Mammary epithelial cell (primary cell): ENCODE measurements at regions of chr6 and their contacts with region 1.

Region 1: DNA sequence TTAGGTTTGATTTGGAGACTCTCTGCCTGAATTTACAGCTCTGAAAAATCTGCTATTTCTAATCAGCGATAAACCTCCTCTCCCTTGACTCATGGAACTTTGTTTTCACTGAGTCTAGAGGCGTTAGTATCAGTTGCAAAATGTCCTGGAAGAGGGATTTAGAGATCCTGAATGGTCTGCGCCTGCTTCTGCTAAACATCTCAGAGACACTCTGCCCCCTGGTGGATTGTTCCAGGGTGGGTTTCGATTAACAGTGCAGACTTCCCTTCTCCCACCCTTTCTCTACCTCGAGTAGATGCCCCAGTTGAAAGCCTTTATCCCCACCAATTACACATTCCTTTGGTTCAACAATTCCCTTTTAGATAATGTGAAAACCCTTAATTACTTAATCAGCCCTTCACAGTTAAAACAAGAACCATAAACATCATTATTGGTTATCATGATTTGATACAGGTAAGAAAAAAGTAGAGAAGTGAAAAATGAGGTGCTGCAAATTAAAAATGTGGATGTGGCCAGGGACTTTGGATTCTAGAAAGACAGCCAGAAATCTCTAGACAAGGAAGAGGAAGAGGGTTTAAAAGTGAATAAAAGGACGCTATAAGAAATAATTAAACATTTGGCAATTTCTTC is 5.5 kb downstream of the HTR1B start:
- DNase-seq: peak; percentile 75
- H3K4me3 ChIP-seq: no peak overlapping the region
- H3K27ac ChIP-seq: peak overlapping the region; percentile 74
- H3K4me1 ChIP-seq: peaks cover 21% of the 10 kb centered on the region
- H3K27me3 ChIP-seq: no peaks in the 10 kb centered on the region
- CTCF ChIP-seq: peak; percentile 64 to 70

Region 2: GRCh38 chr6:75934643-75935472 is 1523.0 kb before region 1 on chr6:
- CTCF ChIA-PET with region 1: no interaction called
- dilution Hi-C with region 1: no loop called
- in situ Hi-C with region 1: no loop called
- intact Hi-C with region 1: loop called (anchors 5 kb)
- DNase-seq: peak; percentile 57
- H3K4me3 ChIP-seq: peak overlapping the region; percentile 25 to 44 (median 43)
- H3K27ac ChIP-seq: no peak overlapping the region
- H3K4me1 ChIP-seq: peaks cover 6% of the 10 kb centered on the region
- H3K27me3 ChIP-seq: no peaks in the 10 kb centered on the region
- CTCF ChIP-seq: peak; percentile 66 to 83

Region 3: DNA sequence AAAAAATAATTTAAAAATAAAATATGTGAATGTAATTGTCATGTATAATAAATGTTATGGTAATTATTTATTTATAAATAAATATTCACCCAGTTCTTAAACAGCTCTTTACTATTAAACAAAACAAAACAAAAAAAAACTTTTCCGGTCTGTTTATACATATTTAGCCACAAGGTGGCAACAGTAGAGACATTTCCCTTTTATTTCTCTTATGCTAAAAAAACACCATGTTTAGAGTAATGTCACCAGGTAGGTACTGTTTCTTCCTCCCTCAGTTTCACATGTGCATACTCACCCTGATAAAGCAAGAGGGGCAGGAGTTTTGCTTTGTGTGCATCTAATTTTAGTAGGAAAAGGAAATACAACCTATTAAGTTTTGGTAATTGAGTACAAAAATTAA is 775.0 kb before region 1 on chr6:
- CTCF ChIA-PET with region 1: no interaction called
- dilution Hi-C with region 1: no loop called
- in situ Hi-C with region 1: loop called (anchors 5 to 25 kb)
- intact Hi-C with region 1: no loop called
- DNase-seq: no peak
- H3K4me3 ChIP-seq: no peak overlapping the region
- H3K27ac ChIP-seq: no peak overlapping the region
- H3K4me1 ChIP-seq: no peaks in the 10 kb centered on the region
- H3K27me3 ChIP-seq: no peaks in the 10 kb centered on the region
- CTCF ChIP-seq: peak; percentile 34 to 41

Region 4: DNA sequence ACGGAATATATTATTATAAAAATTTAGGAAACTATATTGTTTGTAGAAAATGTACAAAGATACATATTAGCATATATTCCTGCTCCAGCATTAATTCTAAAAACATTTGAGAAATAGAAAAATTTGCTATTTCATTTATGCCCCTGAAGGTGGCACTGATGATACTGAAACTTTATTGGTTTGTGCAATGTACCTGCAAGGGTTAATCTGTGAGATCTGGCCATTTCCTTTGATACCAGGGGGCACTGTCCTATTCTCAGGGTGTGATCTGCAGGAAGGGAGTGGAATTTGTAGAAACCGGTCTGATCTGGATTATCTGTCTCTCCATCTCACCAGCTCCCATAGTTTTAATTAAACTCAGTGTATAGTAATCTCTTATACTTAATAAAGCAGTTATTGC is 760.2 kb before region 1 on chr6:
- CTCF ChIA-PET with region 1: no interaction called
- dilution Hi-C with region 1: no loop called
- in situ Hi-C with region 1: loop called in 1 of 2 experiments (anchors 25 kb)
- intact Hi-C with region 1: loop called (anchors 2 kb)
- DNase-seq: no peak
- H3K4me3 ChIP-seq: no peak overlapping the region
- H3K27ac ChIP-seq: no peak overlapping the region
- H3K4me1 ChIP-seq: no peaks in the 10 kb centered on the region
- H3K27me3 ChIP-seq: no peaks in the 10 kb centered on the region
- CTCF ChIP-seq: peak; percentile 30 to 45

Region 5: DNA sequence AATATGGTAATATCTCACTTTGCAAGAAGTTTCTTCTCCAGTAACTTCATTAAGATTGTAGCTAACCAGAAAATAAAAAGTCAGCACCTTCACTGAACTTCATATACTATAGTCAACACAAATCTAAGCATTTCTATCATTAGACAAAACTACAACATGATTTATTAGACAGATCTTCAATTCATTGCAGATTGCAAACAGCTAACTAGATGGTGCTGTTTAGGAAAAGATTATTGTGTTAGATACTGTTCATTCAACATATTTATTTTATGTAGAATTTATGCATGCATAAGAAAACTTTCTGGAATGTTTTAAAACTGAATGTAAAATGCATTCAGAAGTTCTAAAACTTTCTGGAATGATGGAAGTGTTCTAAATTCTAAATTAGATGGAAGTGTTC is 436.6 kb before region 1 on chr6:
- CTCF ChIA-PET with region 1: no interaction called
- dilution Hi-C with region 1: no loop called
- in situ Hi-C with region 1: no loop called
- intact Hi-C with region 1: loop called (anchors 5 kb)
- DNase-seq: no peak
- H3K4me3 ChIP-seq: no peak overlapping the region
- H3K27ac ChIP-seq: no peak overlapping the region
- H3K4me1 ChIP-seq: no peaks in the 10 kb centered on the region
- H3K27me3 ChIP-seq: no peaks in the 10 kb centered on the region
- CTCF ChIP-seq: no peak

Region 6: GRCh38 chr6:77292564-77293546 is 165.0 kb before region 1 on chr6:
- CTCF ChIA-PET with region 1: no interaction called
- dilution Hi-C with region 1: no loop called
- in situ Hi-C with region 1: no loop called
- intact Hi-C with region 1: loop called (anchors 2 kb)
- DNase-seq: peak; percentile 78
- H3K4me3 ChIP-seq: peak overlapping the region in 2 of 3 experiments; percentile 15 to 18
- H3K27ac ChIP-seq: peak overlapping the region; percentile 79
- H3K4me1 ChIP-seq: peaks cover 39% of the 10 kb centered on the region
- H3K27me3 ChIP-seq: no peaks in the 10 kb centered on the region
- CTCF ChIP-seq: no peak

Region 7: DNA sequence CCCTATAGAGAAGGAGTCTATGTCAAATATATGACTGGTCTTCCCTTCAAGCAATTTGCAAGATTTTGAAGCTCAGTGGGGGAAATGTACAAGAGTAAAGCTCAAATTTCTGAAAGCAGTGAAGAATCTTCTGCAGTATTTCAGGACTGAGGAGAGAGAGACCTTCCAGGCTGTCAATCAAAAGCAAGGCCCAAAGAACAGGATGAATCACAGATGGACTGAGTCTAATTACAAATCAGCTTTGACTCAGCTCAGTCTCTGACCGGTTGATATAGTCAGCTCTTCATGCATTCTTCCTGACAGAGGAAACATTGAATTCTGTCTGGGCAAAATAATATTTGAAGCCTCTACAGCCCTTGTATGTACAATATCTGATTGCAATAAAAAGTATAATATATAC is 13.1 kb after region 1 on chr6:
- CTCF ChIA-PET with region 1: no interaction called
- dilution Hi-C with region 1: no loop called
- in situ Hi-C with region 1: no loop called
- intact Hi-C with region 1: no loop called
- DNase-seq: peak; percentile 55
- H3K4me3 ChIP-seq: no peak overlapping the region
- H3K27ac ChIP-seq: no peak overlapping the region
- H3K4me1 ChIP-seq: peaks cover 15% of the 10 kb centered on the region
- H3K27me3 ChIP-seq: no peaks in the 10 kb centered on the region
- CTCF ChIP-seq: no peak

Region 8: GRCh38 chr6:77561768-77562314 is 104.0 kb after region 1 on chr6:
- CTCF ChIA-PET with region 1: no interaction called
- dilution Hi-C with region 1: no loop called
- in situ Hi-C with region 1: no loop called
- intact Hi-C with region 1: no loop called
- DNase-seq: no peak
- H3K4me3 ChIP-seq: no peak overlapping the region
- H3K27ac ChIP-seq: no peak overlapping the region
- H3K4me1 ChIP-seq: no peaks in the 10 kb centered on the region
- H3K27me3 ChIP-seq: no peaks in the 10 kb centered on the region
- CTCF ChIP-seq: no peak